ENCODE measurements at regions of chr17 and their contacts with region 1.

Region 1: DNA sequence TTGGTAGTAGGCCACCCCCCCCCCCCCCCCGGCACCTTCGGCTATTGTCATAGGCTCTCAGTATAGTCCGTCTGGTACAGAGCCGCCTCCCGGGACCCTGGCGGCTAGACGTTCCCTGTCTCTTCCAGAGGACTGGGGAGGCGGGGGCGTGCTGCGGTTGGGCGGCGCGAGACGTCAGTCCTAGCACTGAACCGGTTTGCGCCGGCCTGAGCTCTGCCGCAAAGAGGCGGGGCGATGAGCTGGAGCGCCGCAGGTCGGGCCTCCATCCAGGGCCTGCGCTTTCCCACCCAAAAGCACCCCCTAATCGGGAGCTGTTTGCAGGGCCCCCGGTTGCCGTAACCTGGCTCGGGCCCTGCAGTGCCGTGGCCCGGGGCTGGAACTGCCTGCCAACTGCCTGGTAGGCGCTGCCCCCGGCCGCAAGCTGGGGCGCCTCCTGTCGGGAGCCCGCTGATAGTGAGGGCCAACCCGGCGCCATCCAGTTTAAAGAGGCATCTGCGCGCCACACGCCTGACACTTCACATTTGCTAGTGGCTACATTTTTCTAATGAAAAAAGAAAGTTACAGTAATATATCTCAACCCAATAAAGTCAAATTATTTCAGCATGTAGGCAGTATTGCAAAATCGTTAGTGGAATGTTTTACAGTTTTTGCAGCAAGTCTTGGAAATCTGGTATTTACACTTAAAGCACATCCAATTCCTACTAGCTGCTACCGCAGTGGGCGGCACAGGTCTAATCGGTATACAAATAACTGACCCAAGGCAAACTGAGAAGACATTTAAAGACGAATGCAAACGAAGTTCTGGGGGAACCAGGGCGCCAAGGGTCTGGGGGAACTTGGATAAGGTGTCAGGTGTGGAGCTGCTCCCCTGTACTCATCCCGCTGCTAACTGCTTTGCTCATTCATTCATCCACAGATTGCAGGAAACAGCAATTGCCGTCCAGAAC is 748 bp upstream of the USP22 start:
- DNase-seq: peak; percentile 90 to 99 (median 95)
- ATAC-seq: peak; percentile 77
- H3K4me3 ChIP-seq: peak overlapping the region; percentile 55 to 66
- H3K4me3 Mint-ChIP-seq: peak overlapping the region; percentile 78
- H3K27ac ChIP-seq: peak overlapping the region; percentile 94 to 98
- H3K27ac Mint-ChIP-seq: peak overlapping the region; percentile 92
- H3K4me1 ChIP-seq: peaks cover 25% of the 10 kb centered on the region
- H3K4me1 Mint-ChIP-seq: peaks cover 31% of the 10 kb centered on the region
- H3K27me3 ChIP-seq: no peaks in the 10 kb centered on the region
- H3K27me3 Mint-ChIP-seq: no peaks in the 10 kb centered on the region
- CTCF ChIP-seq: peak; percentile 96

Region 2: DNA sequence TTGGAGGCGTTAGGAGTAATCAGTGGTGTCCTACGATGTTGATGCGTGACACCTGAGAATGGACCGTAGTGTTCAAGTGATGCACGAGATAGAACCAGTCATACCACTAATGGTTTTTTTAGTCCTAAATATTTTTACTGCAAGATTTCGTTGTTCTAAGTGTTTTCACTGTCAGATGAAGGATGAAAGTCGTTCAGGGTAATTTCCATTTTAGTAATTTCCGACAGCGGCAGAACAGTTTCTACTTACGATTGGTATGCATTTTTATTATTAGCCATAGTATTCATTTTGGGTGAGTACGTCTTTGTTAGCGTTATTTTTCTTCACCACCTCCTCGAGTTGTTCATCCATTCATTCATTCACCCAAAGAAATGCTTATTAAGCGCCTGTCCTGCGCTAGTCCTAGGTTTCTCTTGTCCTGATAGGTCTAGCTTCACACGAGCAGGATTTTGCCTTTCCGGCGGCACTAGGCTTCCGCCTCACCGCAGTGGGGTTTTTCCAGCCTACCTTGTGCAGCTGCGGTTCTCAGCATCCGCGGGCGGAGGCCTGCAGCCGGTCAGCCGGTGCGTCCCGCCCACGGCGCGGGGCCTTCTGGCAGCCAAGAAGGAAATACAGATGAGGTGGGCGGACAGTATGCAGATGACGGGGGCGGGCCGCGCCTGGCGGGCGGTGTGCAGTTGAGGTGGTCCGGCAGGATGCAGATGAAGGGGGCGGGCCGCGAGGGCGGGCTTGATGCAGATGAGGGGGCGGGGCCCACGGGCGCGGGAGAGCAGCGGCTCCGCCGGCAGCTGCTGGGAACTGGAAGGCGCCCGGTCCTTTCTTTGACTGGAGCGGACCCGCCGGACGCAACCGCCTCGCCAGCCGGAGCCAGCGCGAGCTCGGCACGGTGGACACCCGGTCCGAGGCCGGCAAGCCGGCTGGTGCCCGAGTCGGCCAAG is 888.0 kb before region 1 on chr17:
- CTCF ChIA-PET with region 1: no interaction called
- POLR2A ChIA-PET with region 1: no interaction called
- intact Hi-C with region 1: loop called in 1 of 2 experiments (anchors 2 kb)
- DNase-seq: peak; percentile 87 to 98 (median 95)
- ATAC-seq: peak; percentile 98
- H3K4me3 ChIP-seq: peak overlapping the region; percentile 48 to 70
- H3K4me3 Mint-ChIP-seq: no peak overlapping the region
- H3K27ac ChIP-seq: peak overlapping the region; percentile 21 to 47
- H3K27ac Mint-ChIP-seq: no peak overlapping the region
- H3K4me1 ChIP-seq: peaks cover 16% of the 10 kb centered on the region
- H3K4me1 Mint-ChIP-seq: peaks cover 3% of the 10 kb centered on the region
- H3K27me3 ChIP-seq: no peaks in the 10 kb centered on the region
- H3K27me3 Mint-ChIP-seq: no peaks in the 10 kb centered on the region
- CTCF ChIP-seq: no peak

Region 3: DNA sequence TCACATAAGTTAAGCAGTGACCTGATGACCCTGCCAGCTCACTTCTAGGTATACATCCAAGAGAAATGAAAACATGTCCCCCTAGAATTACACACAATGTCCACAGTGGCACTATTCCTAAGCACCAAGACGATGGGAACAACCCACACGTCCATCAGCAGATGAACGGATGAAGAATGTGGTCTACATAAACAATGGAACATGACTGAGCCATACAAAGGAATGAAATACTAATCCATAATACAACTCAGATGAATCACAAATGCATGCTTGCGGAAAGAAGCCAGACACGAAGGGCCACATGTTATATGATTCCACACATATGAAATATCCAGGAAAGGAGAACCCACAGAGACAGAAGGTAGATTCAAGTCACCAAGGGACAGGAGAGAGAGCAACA is 18.1 kb before region 1 on chr17:
- CTCF ChIA-PET with region 1: interaction called, 9 read pairs
- POLR2A ChIA-PET with region 1: interaction called, 5 read pairs
- intact Hi-C with region 1: loop called (anchors 1 kb)
- DNase-seq: no peak
- ATAC-seq: no peak
- H3K4me3 ChIP-seq: no peak overlapping the region
- H3K4me3 Mint-ChIP-seq: no peak overlapping the region
- H3K27ac ChIP-seq: no peak overlapping the region
- H3K27ac Mint-ChIP-seq: peak overlapping the region; percentile 85
- H3K4me1 ChIP-seq: peaks cover 32% of the 10 kb centered on the region
- H3K4me1 Mint-ChIP-seq: peaks cover 72% of the 10 kb centered on the region
- H3K27me3 ChIP-seq: no peaks in the 10 kb centered on the region
- H3K27me3 Mint-ChIP-seq: no peaks in the 10 kb centered on the region
- CTCF ChIP-seq: no peak

Region 4: GRCh38 chr17:21081967-21082366 is 38.4 kb after region 1 on chr17:
- CTCF ChIA-PET with region 1: no interaction called
- POLR2A ChIA-PET with region 1: no interaction called
- intact Hi-C with region 1: no loop called
- DNase-seq: no peak
- ATAC-seq: no peak
- H3K4me3 ChIP-seq: no peak overlapping the region
- H3K4me3 Mint-ChIP-seq: no peak overlapping the region
- H3K27ac ChIP-seq: no peak overlapping the region
- H3K27ac Mint-ChIP-seq: no peak overlapping the region
- H3K4me1 ChIP-seq: no peaks in the 10 kb centered on the region
- H3K4me1 Mint-ChIP-seq: no peaks in the 10 kb centered on the region
- H3K27me3 ChIP-seq: no peaks in the 10 kb centered on the region
- H3K27me3 Mint-ChIP-seq: peaks cover 5% of the 10 kb centered on the region
- CTCF ChIP-seq: no peak

Region 5: DNA sequence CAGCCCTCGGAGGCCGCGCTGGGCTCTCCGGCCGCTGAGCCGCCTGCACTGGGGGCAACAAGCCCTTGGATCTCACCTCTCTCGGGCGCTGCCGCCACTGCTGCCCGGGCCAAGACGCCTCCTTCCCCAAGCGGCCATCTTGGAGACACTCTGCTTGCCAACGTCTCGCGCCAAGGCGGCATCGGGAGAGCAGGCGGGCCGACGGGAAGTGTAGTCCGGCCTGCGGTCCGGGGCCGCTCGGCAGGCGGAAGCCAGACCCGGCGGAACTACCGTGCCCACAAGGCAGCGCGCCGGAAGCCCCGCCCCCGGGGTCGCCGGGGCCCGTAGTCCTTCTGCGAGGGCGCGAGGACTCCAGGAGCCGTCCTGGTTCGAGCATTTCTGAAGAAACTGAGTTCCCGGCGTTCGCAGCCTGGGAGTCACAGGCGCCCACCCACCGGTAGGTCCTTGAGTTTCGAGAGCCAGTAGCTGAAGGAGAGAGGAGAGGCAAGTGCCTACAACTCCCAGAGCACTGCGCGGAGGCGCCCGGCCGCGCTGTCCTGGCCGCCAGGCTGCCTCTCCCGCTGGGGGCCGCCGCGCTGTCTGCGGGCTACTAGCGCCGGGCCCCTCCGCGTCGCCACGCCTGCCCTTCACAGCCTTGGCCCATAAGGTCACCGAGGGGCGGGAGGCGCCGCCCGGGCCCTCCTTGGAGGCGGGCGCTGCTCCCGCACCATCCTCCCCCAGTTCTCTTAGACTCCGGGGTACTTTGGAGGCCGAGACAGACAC is 170.6 kb after region 1 on chr17 and contains the start of gene TMEM11:
- CTCF ChIA-PET with region 1: interaction called, 8 read pairs
- POLR2A ChIA-PET with region 1: no interaction called
- intact Hi-C with region 1: loop called (anchors 1 to 2 kb)
- DNase-seq: peak; percentile 89 to 97 (median 94)
- ATAC-seq: peak; percentile 92
- H3K4me3 ChIP-seq: peak within 1 kb of the TSS; percentile 87 to 100
- H3K4me3 Mint-ChIP-seq: peak within 1 kb of the TSS; percentile 94
- H3K27ac ChIP-seq: peak within 1 kb of the TSS; percentile 84 to 95
- H3K27ac Mint-ChIP-seq: peak within 1 kb of the TSS; percentile 93
- H3K4me1 ChIP-seq: peaks cover 38% of the 10 kb centered on the region
- H3K4me1 Mint-ChIP-seq: peaks cover 52% of the 10 kb centered on the region
- H3K27me3 ChIP-seq: no peaks in the 10 kb centered on the region
- H3K27me3 Mint-ChIP-seq: no peaks in the 10 kb centered on the region
- CTCF ChIP-seq: peak; percentile 26
- total RNA-seq, gene TMEM11: 23.4 to 26.2 TPM

Region 6: GRCh38 chr17:21284319-21285163 is 241.0 kb after region 1 on chr17 and contains the start of gene MAP2K3:
- CTCF ChIA-PET with region 1: no interaction called
- POLR2A ChIA-PET with region 1: interaction called, 6 read pairs
- intact Hi-C with region 1: loop called (anchors 1 to 2 kb)
- DNase-seq: peak; percentile 84 to 97 (median 94)
- ATAC-seq: peak; percentile 65
- H3K4me3 ChIP-seq: peak within 1 kb of the TSS; percentile 78 to 81
- H3K4me3 Mint-ChIP-seq: peak within 1 kb of the TSS; percentile 94
- H3K27ac ChIP-seq: peak within 1 kb of the TSS; percentile 69 to 99
- H3K27ac Mint-ChIP-seq: peak within 1 kb of the TSS; percentile 96
- H3K4me1 ChIP-seq: peaks cover 45% of the 10 kb centered on the region
- H3K4me1 Mint-ChIP-seq: peaks cover 54% of the 10 kb centered on the region
- H3K27me3 ChIP-seq: no peaks in the 10 kb centered on the region
- H3K27me3 Mint-ChIP-seq: no peaks in the 10 kb centered on the region
- CTCF ChIP-seq: no peak
- total RNA-seq, gene MAP2K3: 59.9 to 63.8 TPM

Region 7: DNA sequence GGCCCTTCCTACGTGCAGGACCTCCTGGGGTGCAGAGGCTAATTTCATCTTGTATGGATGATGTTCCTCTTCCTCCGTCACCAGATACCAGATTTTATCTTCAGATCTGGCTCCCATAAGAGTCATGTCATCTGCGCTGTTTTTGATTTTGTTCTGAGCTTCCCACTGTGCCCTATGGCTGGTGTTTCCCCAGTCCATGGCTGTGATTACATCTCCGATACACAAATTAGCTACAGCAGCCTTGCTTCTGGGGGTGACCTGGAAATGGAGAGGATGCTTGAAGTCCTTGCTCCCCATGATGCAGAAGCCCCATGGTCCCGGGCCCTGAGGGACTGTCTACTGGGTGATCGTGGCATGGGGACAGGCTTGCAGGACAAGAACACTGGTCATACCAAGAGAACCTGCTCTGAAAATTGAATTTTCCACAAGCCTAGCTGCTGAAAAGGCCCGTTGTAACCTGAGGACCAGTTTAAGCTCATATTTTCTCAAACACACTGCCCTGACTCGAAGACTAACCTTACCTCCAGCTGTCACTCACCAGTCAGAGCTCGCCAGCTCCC is 401.6 kb after region 1 on chr17:
- CTCF ChIA-PET with region 1: no interaction called
- POLR2A ChIA-PET with region 1: no interaction called
- intact Hi-C with region 1: no loop called
- DNase-seq: no peak
- ATAC-seq: no peak
- H3K4me3 ChIP-seq: no peak overlapping the region
- H3K4me3 Mint-ChIP-seq: no peak overlapping the region
- H3K27ac ChIP-seq: no peak overlapping the region
- H3K27ac Mint-ChIP-seq: no peak overlapping the region
- H3K4me1 ChIP-seq: no peaks in the 10 kb centered on the region
- H3K4me1 Mint-ChIP-seq: no peaks in the 10 kb centered on the region
- H3K27me3 ChIP-seq: no peaks in the 10 kb centered on the region
- H3K27me3 Mint-ChIP-seq: peaks cover 6% of the 10 kb centered on the region
- CTCF ChIP-seq: no peak

Region 8: GRCh38 chr17:21551081-21551881 is 507.7 kb after region 1 on chr17:
- CTCF ChIA-PET with region 1: no interaction called
- POLR2A ChIA-PET with region 1: no interaction called
- intact Hi-C with region 1: loop called in 1 of 2 experiments (anchors 1 kb)
- DNase-seq: peak; percentile 67 to 89 (median 81)
- ATAC-seq: peak; percentile 94
- H3K4me3 ChIP-seq: peak overlapping the region; percentile 59 to 89
- H3K4me3 Mint-ChIP-seq: peak overlapping the region; percentile 86
- H3K27ac ChIP-seq: peak overlapping the region; percentile 18 to 66
- H3K27ac Mint-ChIP-seq: no peak overlapping the region
- H3K4me1 ChIP-seq: peaks cover 28% of the 10 kb centered on the region
- H3K4me1 Mint-ChIP-seq: peaks cover 35% of the 10 kb centered on the region
- H3K27me3 ChIP-seq: no peaks in the 10 kb centered on the region
- H3K27me3 Mint-ChIP-seq: peaks cover 13% of the 10 kb centered on the region
- CTCF ChIP-seq: no peak

Measured in CD8-positive, alpha-beta T cell (primary cell).